Activated CD8-positive, alpha-beta memory T cell treated with anti-CD3 and anti-CD28 coated beads, Interleukin-2, amount 10 ng/mL, durations not matched to agents 7 days and 5 days (primary cell): ENCODE measurements at regions of chr22 and their contacts with region 1.

Region 1: DNA sequence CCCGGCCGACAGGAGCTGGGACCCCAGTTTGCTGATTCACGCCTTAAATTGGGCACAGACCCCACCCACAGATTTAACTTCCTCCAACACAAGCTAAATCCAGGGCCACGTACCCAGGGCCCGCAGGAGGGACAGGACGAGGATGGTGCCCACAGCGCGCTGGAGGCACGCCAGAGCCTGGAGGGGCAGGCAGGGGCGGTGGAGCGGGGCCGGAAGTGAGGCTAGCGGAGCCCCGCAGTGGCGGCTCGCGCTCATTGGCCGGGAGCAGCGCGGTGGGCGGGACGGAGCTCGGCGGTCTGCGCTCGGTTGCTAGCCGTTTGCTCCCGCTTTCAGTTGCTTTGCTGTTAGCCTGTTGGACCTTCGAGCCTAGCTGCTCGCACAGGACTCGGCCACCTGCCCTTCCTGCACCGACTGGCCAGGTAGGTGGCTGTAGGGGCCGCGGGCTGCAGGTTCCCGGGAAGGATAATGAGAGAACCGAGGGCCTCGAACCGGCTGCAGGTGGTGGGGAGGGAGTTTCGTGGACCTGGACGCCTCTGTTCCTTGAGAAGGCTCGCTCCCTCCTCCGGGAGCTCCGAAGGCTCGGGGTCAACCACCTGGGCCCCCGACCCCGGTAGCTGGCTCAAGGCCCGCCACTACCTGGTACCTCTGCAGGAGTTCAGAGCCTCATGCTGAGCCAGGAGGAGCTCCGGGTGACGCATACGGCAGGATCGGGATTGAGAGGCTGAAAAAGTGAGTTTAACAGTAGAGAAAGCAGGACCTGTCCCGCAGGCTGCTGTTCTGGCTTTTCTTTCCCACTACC is at the start of gene CCDC134:
- DNase-seq: peak; percentile 94
- ATAC-seq: peak; percentile 97
- H3K4me3 Mint-ChIP-seq: peak within 1 kb of the TSS; percentile 93
- H3K27ac Mint-ChIP-seq: peak within 1 kb of the TSS; percentile 97
- H3K4me1 Mint-ChIP-seq: peaks cover 45% of the 10 kb centered on the region
- H3K27me3 Mint-ChIP-seq: no peaks in the 10 kb centered on the region
- total RNA-seq, gene CCDC134: 25.3 to 27.9 TPM

Region 2: DNA sequence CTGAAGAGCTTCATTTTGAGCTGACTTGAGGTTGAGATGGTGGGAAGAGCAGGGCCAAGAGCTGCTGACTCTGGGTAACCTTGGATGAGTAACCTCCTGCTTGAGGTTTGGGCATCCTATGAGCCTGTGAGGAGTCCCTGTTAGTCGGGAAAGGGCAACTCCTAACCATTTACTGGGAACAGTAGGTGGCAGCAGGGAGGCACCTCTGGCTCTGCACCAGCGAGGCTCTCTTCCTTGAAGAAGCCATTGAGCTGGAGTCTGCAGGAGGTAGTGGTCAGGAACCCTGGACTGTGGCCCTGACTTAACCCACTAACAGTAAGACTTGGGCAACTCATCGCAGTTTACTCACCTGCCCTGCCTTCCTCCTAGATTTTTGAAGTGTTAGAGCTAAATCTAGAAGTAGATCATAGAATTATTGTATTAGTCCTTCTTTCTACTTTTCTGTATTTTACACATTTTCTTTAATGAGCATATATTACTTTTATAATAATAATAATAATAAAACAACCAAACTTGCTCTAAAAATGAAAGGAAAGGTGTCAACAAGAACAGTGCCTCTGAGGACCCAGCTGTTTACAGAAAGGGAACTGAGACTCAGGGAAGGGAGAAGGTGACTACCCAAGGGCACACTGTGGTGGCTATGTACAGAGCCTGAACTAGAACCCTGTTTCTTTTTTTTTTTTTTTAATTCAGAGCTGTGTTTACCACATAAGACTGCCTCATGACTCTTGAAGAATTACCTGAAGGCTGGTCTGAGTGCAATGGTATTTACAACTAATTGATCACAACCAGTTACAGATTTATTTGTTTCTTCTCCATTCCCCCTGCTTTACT is 53.8 kb before region 1 on chr22:
- CTCF ChIA-PET with region 1: interaction called, 29 read pairs
- DNase-seq: peak; percentile 72
- ATAC-seq: peak; percentile 96
- H3K4me3 Mint-ChIP-seq: no peak overlapping the region
- H3K27ac Mint-ChIP-seq: no peak overlapping the region
- H3K4me1 Mint-ChIP-seq: peaks cover 6% of the 10 kb centered on the region
- H3K27me3 Mint-ChIP-seq: peaks cover 15% of the 10 kb centered on the region

Region 3: GRCh38 chr22:41780746-41781505 is 19.6 kb before region 1 on chr22:
- CTCF ChIA-PET with region 1: interaction called, 52 read pairs
- DNase-seq: peak; percentile 98
- ATAC-seq: peak; percentile 97
- H3K4me3 Mint-ChIP-seq: peak overlapping the region; percentile 76
- H3K27ac Mint-ChIP-seq: peak overlapping the region; percentile 99
- H3K4me1 Mint-ChIP-seq: peaks cover 41% of the 10 kb centered on the region
- H3K27me3 Mint-ChIP-seq: no peaks in the 10 kb centered on the region

Region 4: GRCh38 chr22:41786418-41786817 is 14.1 kb before region 1 on chr22:
- CTCF ChIA-PET with region 1: interaction called, 52 read pairs
- DNase-seq: no peak
- ATAC-seq: no peak
- H3K4me3 Mint-ChIP-seq: no peak overlapping the region
- H3K27ac Mint-ChIP-seq: no peak overlapping the region
- H3K4me1 Mint-ChIP-seq: peaks cover 21% of the 10 kb centered on the region
- H3K27me3 Mint-ChIP-seq: no peaks in the 10 kb centered on the region

Region 5: DNA sequence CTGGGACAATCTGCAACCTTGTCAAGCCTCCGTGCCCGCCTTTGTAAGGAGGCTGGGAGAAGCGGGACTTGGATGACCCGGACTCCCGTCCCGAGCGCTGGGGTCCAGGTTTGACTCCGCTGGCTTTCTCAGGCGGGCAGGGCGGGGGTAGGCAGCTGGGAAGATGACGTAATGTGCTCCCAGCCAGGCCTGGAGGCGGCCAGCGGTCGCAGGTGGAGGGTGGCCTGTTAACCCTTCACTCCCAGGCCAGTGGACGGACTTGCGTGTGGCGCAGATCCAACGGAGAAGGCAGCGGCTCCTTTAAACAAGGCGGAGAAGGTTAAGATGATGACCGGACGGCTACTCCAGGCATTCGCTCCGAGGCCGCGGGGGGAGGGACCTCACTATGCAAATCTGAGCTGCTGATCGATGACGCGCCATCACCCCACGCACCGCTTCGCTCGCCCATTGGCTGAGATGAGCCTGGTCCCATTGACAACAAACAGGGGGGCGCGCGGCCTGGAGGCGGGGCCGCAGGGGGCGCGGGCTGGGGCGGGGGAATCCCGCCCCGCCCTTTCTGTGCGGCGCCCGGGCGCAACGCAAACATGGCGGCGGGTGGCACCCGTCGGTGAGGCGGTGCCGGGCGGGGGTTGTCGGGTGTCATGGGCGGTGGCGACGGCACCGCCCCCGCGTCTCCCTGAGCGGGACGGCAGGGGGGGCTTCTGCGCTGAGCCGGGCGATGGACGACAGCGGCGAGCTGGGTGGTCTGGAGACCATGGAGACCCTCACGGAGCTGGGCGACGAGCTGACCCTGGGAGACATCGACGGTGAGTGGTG is 32.2 kb after region 1 on chr22 and contains the start of gene SREBF2:
- CTCF ChIA-PET with region 1: interaction called, 16 read pairs
- DNase-seq: peak; percentile 100
- ATAC-seq: peak; percentile 95
- H3K4me3 Mint-ChIP-seq: peak within 1 kb of the TSS; percentile 82
- H3K27ac Mint-ChIP-seq: peak within 1 kb of the TSS; percentile 99
- H3K4me1 Mint-ChIP-seq: peaks cover 44% of the 10 kb centered on the region
- H3K27me3 Mint-ChIP-seq: no peaks in the 10 kb centered on the region
- total RNA-seq, gene SREBF2: 130 to 135 TPM